HepG2 (cell line): ENCODE measurements at regions of chr2 and their contacts with region 1.

Region 1: DNA sequence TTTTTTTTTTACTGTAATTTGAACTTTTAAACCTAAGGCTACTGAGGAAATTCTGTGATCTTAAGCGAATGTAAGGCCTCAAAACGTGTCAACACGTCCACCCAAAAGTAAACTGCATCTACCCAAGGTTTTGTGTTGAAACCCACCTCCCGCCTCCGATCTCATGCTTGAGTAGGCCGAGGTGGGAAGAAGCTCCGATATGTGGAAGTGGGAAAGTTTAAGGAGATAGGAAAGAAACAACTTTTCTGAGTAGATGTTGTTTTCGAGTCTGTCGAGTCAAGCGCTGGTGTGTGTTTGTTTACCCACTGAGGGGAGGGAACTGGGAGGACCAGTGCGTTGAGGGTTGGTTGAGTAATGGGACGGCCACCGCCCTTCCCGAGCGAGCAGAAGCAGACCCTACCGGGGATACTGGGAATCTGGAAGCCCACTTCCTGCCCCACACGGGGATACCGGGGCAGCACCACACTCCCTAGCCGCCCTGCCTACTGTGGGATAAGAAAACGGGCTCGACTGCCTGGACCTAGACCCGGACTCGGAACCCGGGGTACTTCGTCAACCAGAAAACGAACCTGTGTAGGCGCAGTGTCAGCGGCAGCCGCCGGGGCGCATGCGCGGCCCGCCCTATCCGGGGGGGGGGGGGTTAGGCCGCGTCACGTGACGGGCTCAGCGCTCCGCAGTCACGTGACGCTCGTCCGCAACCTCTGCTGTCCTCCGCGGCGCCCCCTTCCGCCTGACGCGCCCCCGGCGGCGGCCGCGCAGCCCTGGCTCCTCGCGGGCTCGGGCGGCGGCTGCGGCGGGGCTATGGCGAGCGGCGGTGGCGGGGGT is at the start of gene RETREG2:
- DNase-seq: peak; percentile 93
- ATAC-seq: peak; percentile 83
- H3K4me3 ChIP-seq: peak within 1 kb of the TSS; percentile 72 to 87 (median 79)
- H3K27ac ChIP-seq: peak within 1 kb of the TSS; percentile 90
- H3K4me1 ChIP-seq: peaks cover 37% of the 10 kb centered on the region
- H3K27me3 ChIP-seq: no peaks in the 10 kb centered on the region; a peak in 1 of 5 replicates
- CTCF ChIP-seq: peak; percentile 65
- EP300 ChIP-seq: peak in 1 of 2 experiments; percentile 5; a peak in 2 of 4 replicates
- POLR2A ChIP-seq: peak in 1 of 2 experiments; percentile 82; a peak in 2 of 4 replicates
- RAD21 ChIP-seq: peak; percentile 83
- total RNA-seq, gene RETREG2: 59.7 and 86.0 TPM in 2 replicates

Region 2: DNA sequence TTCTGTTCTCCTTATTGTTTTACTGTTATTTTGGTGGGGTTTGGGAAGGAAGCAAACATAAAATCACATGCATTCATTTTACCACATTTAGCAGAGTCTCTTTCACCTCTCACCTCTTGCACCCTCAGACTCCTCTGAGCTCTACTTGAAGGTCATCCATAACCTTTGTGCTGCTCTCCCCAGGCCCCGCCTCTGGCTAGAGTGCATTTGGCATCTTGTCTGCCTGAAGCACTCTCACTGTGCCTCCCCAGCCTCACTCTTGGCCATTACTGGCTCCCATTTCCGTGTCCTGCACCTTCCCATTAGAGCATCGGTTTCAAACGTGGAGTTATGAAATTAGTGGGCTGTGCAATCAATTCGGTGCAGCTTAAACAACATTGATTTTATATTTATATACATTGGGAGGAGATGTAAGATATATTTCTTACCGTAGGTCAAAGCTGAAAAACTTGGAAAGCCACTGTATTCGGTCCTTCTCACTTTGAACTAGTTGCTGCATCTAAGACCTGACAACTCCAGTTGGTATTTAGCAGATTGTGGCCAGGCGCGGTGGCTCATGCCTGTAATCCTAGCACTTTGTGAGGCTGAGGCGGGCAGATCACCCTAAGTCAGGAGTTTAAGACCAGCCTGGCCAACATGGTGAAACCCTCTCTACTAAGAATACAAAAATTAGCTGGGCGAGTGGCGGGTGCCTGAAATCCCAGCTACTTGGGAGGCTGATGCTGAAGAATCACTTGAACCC is 21.9 kb after region 1 on chr2:
- CTCF ChIA-PET with region 1: no interaction called
- POLR2A ChIA-PET with region 1: interaction called, 23 read pairs
- in situ Hi-C with region 1: no loop called
- intact Hi-C with region 1: no loop called
- DNase-seq: no peak
- ATAC-seq: peak; percentile 39
- H3K4me3 ChIP-seq: no peak overlapping the region
- H3K27ac ChIP-seq: peak overlapping the region; percentile 25
- H3K4me1 ChIP-seq: peaks cover 33% of the 10 kb centered on the region
- H3K27me3 ChIP-seq: no peaks in the 10 kb centered on the region
- CTCF ChIP-seq: no peak
- EP300 ChIP-seq: no peak
- POLR2A ChIP-seq: no peak; a peak in 2 of 4 replicates
- RAD21 ChIP-seq: no peak

Region 3: GRCh38 chr2:219218732-219219701 is 41.3 kb after region 1 on chr2 and contains the start of gene ABCB6:
- CTCF ChIA-PET with region 1: no interaction called
- POLR2A ChIA-PET with region 1: interaction called, 52 read pairs
- in situ Hi-C with region 1: no loop called
- intact Hi-C with region 1: loop called (anchors 2 kb)
- DNase-seq: peak; percentile 93
- ATAC-seq: peak; percentile 79
- H3K4me3 ChIP-seq: peak within 1 kb of the TSS; percentile 80 to 92 (median 85)
- H3K27ac ChIP-seq: peak within 1 kb of the TSS; percentile 92
- H3K4me1 ChIP-seq: peaks cover 43% of the 10 kb centered on the region
- H3K27me3 ChIP-seq: no peaks in the 10 kb centered on the region
- CTCF ChIP-seq: 0 out of 2 replicates have a peak, but pooled peaks have one; percentile 20
- EP300 ChIP-seq: no peak; a peak in 1 of 4 replicates
- POLR2A ChIP-seq: peak in 1 of 2 experiments; percentile 94; a peak in 2 of 4 replicates
- RAD21 ChIP-seq: no peak
- total RNA-seq, gene ABCB6: 51.3 and 137 TPM in 2 replicates

Region 4: GRCh38 chr2:219245148-219245898 is 67.6 kb after region 1 on chr2 and contains the starts of genes GLB1L and STK16:
- CTCF ChIA-PET with region 1: no interaction called
- POLR2A ChIA-PET with region 1: interaction called, 27 read pairs
- in situ Hi-C with region 1: no loop called
- intact Hi-C with region 1: no loop called
- DNase-seq: peak; percentile 89
- ATAC-seq: peak; percentile 81
- H3K4me3 ChIP-seq: peak within 1 kb of the TSS; percentile 88 to 97 (median 93)
- H3K27ac ChIP-seq: peak within 1 kb of the TSS; percentile 72
- H3K4me1 ChIP-seq: peaks cover 53% of the 10 kb centered on the region
- H3K27me3 ChIP-seq: no peaks in the 10 kb centered on the region; a peak in 1 of 5 replicates
- CTCF ChIP-seq: no peak; the same call in 1 of the 2 replicates
- EP300 ChIP-seq: no peak
- POLR2A ChIP-seq: peak in 1 of 2 experiments; percentile 91; a peak in 2 of 4 replicates
- RAD21 ChIP-seq: peak; percentile 44
- total RNA-seq, gene GLB1L: 2.7 and 6.8 TPM in 2 replicates
- total RNA-seq, gene STK16: 27.0 and 28.0 TPM in 2 replicates

Region 5: GRCh38 chr2:219278655-219279516 is 101.1 kb after region 1 on chr2 and contains the start of gene DNAJB2:
- CTCF ChIA-PET with region 1: no interaction called
- POLR2A ChIA-PET with region 1: interaction called, 15 read pairs
- in situ Hi-C with region 1: no loop called
- intact Hi-C with region 1: no loop called
- DNase-seq: peak; percentile 93
- ATAC-seq: peak; percentile 92
- H3K4me3 ChIP-seq: peak within 1 kb of the TSS; percentile 59 to 77 (median 73)
- H3K27ac ChIP-seq: peak within 1 kb of the TSS; percentile 62
- H3K4me1 ChIP-seq: peaks cover 37% of the 10 kb centered on the region
- H3K27me3 ChIP-seq: 0 out of 5 replicates have a peak, but pooled peaks cover 0 to 5% of the 10 kb centered on the region in 2 experiments
- CTCF ChIP-seq: no peak; the same call in 1 of the 2 replicates
- EP300 ChIP-seq: no peak; a peak in 1 of 4 replicates
- POLR2A ChIP-seq: peak; percentile 52 to 79; a peak in 3 of 4 replicates
- RAD21 ChIP-seq: no peak
- total RNA-seq, gene DNAJB2: 18.6 and 21.3 TPM in 2 replicates

Region 6: DNA sequence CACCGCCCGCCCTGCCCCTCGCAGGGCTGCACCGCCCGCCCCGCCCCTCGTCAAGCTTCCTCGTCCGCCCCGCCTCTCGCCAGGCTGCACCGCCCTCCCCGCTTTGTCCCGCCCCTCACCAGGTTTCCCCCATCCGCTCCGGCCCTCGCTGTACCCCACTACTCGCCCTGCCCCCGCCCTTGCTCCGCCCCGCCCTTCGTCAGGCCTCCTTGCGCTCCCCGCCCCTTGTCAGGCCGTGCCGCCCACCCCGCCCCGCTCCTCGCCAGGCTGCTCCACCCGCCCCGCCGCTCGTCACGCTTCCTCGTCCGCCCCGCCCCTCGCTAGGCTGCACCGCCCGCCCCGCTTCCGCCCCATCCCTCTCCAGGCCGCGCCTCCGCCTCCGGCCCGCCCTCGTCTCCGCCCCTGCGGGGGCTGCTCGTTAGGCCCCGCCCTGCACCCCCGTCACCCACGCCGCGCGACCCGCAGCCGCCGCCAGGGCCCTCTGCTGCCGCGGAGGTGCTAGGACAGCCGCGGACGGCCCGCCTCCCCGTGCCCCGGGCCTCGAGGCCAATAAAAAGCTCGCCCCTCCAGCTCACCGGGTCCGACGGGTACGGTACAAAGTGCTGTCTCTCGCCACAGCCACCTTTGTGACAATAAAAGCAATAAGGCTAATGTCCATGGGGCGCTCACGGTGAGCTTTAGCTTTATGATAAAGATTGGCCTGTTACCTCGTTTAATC is 210.5 kb after region 1 on chr2:
- CTCF ChIA-PET with region 1: no interaction called
- POLR2A ChIA-PET with region 1: interaction called, 18 read pairs
- in situ Hi-C with region 1: no loop called
- intact Hi-C with region 1: no loop called
- DNase-seq: peak; percentile 87
- ATAC-seq: peak; percentile 74
- H3K4me3 ChIP-seq: peak overlapping the region; percentile 53 to 70 (median 68)
- H3K27ac ChIP-seq: peak overlapping the region; percentile 68
- H3K4me1 ChIP-seq: peaks cover 30% of the 10 kb centered on the region
- H3K27me3 ChIP-seq: no peaks in the 10 kb centered on the region; a peak in 1 of 5 replicates
- CTCF ChIP-seq: peak; percentile 78
- EP300 ChIP-seq: peak in 1 of 2 experiments; percentile 12; a peak in 1 of 4 replicates
- POLR2A ChIP-seq: peak; percentile 52 to 68; a peak in 3 of 4 replicates
- RAD21 ChIP-seq: peak; percentile 67; the same call in 1 of the 2 replicates